CD14-positive monocyte (primary cell): ENCODE measurements at regions of chr1 and their contacts with region 1.

Region 1: DNA sequence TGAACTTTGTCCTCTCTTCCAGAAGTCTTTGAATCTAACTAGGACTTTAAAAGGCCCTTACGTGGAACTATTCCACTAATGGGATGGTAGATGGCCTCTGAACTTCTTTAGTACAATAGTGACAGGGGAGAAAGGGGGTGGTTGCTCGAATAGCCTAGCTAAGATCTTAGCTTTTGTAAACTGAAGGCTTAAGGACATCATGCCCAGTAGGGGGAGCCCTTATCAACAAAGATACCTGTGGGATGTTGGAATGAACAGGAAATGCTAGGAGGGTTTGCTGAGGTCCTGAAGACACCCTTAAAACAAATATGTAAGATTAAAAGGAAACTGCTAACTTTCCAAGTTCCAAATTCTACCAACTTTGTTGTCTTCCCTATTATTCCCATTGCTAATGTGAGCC is 33.2 kb downstream of the NHLH2 start:
- DNase-seq: peak; percentile 63 to 80 (median 75)
- H3K4me3 ChIP-seq: no peak overlapping the region
- H3K4me3 Mint-ChIP-seq: no peak overlapping the region
- H3K27ac ChIP-seq: no peak overlapping the region
- H3K27ac Mint-ChIP-seq: no peak overlapping the region
- H3K4me1 ChIP-seq: peaks cover 12 to 17% of the 10 kb centered on the region in 2 donors
- H3K4me1 Mint-ChIP-seq: peaks cover 15% of the 10 kb centered on the region
- H3K27me3 ChIP-seq: no peaks in the 10 kb centered on the region
- H3K27me3 Mint-ChIP-seq: peaks cover 0 to 6% (median 0%) of the 10 kb centered on the region in 3 donors
- CTCF ChIP-seq: peak; percentile 81

Region 2: GRCh38 chr1:115877511-115877910 is 69.8 kb after region 1 on chr1:
- intact Hi-C with region 1: loop called (anchors 5 kb)
- DNase-seq: no peak
- H3K4me3 ChIP-seq: no peak overlapping the region
- H3K4me3 Mint-ChIP-seq: no peak overlapping the region
- H3K27ac ChIP-seq: no peak overlapping the region
- H3K27ac Mint-ChIP-seq: no peak overlapping the region
- H3K4me1 ChIP-seq: peaks cover 4 to 6% of the 10 kb centered on the region in 2 donors
- H3K4me1 Mint-ChIP-seq: peaks cover 10% of the 10 kb centered on the region
- H3K27me3 ChIP-seq: no peaks in the 10 kb centered on the region
- H3K27me3 Mint-ChIP-seq: peaks cover 2 to 7% (median 5%) of the 10 kb centered on the region in 3 donors
- CTCF ChIP-seq: no peak

Region 3: GRCh38 chr1:115980998-115981993 is 173.6 kb after region 1 on chr1:
- intact Hi-C with region 1: loop called (anchors 5 to 10 kb)
- DNase-seq: peak in 2 of 3 donors; percentile 51 to 56
- H3K4me3 ChIP-seq: peak overlapping the region in 1 of 3 experiments; percentile 13
- H3K4me3 Mint-ChIP-seq: no peak overlapping the region
- H3K27ac ChIP-seq: peak overlapping the region; percentile 24 to 74
- H3K27ac Mint-ChIP-seq: peak overlapping the region; percentile 55 to 82 (median 76)
- H3K4me1 ChIP-seq: peaks cover 50 to 68% of the 10 kb centered on the region in 2 donors
- H3K4me1 Mint-ChIP-seq: peaks cover 69% of the 10 kb centered on the region
- H3K27me3 ChIP-seq: no peaks in the 10 kb centered on the region
- H3K27me3 Mint-ChIP-seq: no peaks in the 10 kb centered on the region
- CTCF ChIP-seq: peak; percentile 80

Region 4: DNA sequence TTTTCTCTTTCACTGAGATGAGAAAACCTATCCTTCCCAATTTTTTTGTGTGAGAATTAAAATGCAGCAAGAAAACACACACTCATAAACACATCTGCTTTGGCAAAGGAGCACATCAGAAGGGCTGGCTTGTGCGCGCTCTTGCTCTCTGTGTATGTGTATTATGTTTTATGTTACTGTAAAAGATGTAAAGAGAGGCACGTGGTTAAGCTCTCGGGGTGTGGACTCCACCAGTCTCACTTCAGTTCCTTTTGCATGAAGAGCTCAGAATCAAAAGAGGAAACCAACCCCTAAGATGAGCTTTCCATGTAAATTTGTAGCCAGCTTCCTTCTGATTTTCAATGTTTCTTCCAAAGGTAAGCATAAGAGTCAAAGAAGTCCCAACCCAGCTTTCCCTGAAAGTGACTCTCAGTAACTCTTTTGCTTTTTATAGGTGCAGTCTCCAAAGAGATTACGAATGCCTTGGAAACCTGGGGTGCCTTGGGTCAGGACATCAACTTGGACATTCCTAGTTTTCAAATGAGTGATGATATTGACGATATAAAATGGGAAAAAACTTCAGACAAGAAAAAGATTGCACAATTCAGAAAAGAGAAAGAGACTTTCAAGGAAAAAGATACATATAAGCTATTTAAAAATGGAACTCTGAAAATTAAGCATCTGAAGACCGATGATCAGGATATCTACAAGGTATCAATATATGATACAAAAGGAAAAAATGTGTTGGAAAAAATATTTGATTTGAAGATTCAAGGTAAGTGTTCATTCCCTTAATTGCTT is 946.7 kb after region 1 on chr1 and contains the start of gene CD2:
- intact Hi-C with region 1: no loop called
- DNase-seq: peak; percentile 26 to 33 (median 27)
- H3K4me3 ChIP-seq: peak within 1 kb of the TSS in 1 of 3 experiments; percentile 41
- H3K4me3 Mint-ChIP-seq: peak within 1 kb of the TSS; percentile 55
- H3K27ac ChIP-seq: peak within 1 kb of the TSS in 1 of 2 donors; percentile 35
- H3K27ac Mint-ChIP-seq: peak within 1 kb of the TSS; percentile 53 to 82 (median 78)
- H3K4me1 ChIP-seq: peaks cover 60 to 69% of the 10 kb centered on the region in 2 donors
- H3K4me1 Mint-ChIP-seq: peaks cover 60% of the 10 kb centered on the region
- H3K27me3 ChIP-seq: no peaks in the 10 kb centered on the region
- H3K27me3 Mint-ChIP-seq: peaks cover 0 to 2% (median 0%) of the 10 kb centered on the region in 3 donors
- CTCF ChIP-seq: no peak
- polyA plus RNA-seq, gene CD2: 0.89 to 3.6 (median 2.1) TPM